GM18951 (cell line): ENCODE measurements at regions of chr3 and their contacts with region 1.

Region 1: DNA sequence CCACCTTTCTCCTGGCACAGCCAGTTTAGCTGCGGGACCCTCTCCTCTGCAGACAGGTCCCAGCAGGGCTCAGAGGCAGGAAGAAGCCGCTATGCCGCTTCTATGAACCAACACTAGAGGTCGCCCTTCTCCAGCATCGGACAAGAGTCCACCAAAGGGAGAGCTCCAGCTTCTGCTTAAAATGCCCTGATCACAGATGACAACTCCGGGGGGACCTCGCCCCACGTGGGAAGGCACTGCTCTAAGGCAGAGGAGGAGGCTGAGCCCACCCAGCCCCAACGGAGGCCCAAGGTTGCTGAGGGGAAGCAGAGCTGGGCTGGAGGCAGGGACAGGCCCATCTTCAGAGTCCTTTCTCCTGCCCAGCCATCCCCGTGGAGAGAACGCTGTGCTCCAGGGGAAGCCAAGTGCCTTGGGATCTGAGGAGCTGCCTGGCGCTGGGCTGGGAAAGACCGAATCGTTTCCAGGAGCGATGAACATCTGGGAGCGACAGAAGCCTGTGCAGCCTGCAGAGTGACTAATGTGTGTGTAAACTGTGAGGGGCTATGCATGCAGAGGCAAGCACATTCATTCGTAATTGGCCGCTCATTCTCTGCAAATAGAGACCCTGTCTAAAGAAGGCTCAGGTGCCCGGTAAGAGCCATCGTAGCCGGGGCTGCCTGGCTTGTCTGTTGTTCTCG is 43.5 kb upstream of the BDH1 start:
- POLR2A ChIP-seq: no peak

Region 2: DNA sequence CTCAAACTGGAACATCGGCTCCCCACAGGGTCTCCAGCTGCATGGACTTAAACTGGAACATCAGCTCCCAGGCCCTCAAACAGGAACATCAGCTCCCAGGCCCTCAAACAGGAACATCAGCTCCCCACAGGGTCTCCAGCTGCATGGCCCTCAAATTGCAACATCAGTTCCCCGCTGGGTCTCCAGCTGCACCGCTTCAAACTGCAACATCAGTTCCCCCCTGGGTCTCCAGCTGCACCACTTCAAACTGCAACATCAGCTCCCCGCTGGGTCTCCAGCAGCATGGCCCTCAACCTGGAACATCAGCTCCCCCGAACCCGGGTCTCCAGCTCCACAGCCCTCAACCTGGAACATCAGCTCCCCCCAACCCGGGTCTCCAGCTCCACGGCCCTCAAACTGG is 1599.3 kb before region 1 on chr3:
- in situ Hi-C with region 1: loop called (anchors 25 kb)
- POLR2A ChIP-seq: no peak

Region 3: GRCh38 chr3:197186887-197187588 is 412.2 kb before region 1 on chr3:
- in situ Hi-C with region 1: no loop called
- POLR2A ChIP-seq: no peak

Region 4: DNA sequence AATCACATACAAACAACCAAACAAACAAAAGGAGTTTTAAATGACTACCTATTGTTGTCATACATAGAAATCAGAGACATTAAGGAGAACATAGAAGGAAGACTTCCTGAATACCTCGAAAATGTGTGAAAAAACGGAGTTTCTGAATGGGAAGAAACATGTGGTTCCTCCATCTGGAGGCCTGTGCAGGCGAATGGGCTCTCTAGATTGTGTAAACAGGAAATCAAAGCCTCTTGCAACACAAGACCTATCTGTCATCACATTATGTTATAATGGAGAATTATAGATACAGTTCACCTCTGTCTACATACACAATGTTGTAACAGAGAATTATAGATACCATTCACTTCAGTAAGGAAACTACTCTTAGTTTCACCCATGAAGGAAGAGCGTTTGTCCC is 93.4 kb after region 1 on chr3:
- in situ Hi-C with region 1: loop called (anchors 25 kb)
- POLR2A ChIP-seq: no peak

Region 5: GRCh38 chr3:197975311-197975710 is 376.1 kb after region 1 on chr3:
- in situ Hi-C with region 1: no loop called
- POLR2A ChIP-seq: no peak